Common myeloid progenitor, CD34-positive (primary cell): ENCODE measurements at regions of chr10 and their contacts with region 1.

Region 1: GRCh38 chr10:71727738-71728737 is 8.5 kb upstream of the C10orf105 start:
- DNase-seq: peak in 2 of 3 donors; percentile 88 to 90
- H3K4me3 ChIP-seq: peak overlapping the region in 2 of 7 experiments; percentile 21 to 23
- H3K27ac ChIP-seq: peak overlapping the region in 1 of 2 experiments; percentile 45
- H3K4me1 ChIP-seq: peaks cover 15 to 77% (median 71%) of the 10 kb centered on the region in 4 experiments
- H3K27me3 ChIP-seq: no peaks in the 10 kb centered on the region

Region 2: DNA sequence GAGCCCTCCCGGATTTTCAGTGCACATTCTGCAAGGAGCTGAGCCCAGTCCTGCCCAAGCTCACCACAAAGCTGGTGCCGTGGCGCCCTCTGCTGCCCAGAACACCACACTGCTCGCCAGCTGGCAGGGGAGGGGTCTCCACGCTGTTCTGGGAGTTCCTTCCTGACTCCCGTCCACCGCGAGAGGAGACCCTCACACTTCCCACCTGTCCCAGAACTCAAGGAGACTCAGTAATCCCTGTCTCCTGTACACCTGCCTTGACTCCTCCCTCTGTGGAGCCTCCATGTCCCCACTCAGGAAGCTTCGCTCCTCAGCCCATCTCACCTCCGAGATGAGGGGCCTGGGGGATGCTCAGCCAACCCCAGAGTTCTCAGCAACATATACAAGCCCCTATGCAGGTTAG is 19.7 kb before region 1 on chr10:
- CTCF ChIA-PET with region 1: interaction called, 41 read pairs
- POLR2A ChIA-PET with region 1: no interaction called
- DNase-seq: peak; percentile 41 to 54 (median 54)
- H3K4me3 ChIP-seq: no peak overlapping the region
- H3K27ac ChIP-seq: no peak overlapping the region
- H3K4me1 ChIP-seq: peaks cover 0 to 45% (median 17%) of the 10 kb centered on the region in 4 experiments
- H3K27me3 ChIP-seq: no peaks in the 10 kb centered on the region

Region 3: GRCh38 chr10:71740069-71740468 is 12.0 kb after region 1 on chr10:
- CTCF ChIA-PET with region 1: interaction called, 72 read pairs
- POLR2A ChIA-PET with region 1: interaction called, 3 read pairs
- DNase-seq: peak in 2 of 3 donors; percentile 22 to 35
- H3K4me3 ChIP-seq: no peak overlapping the region
- H3K27ac ChIP-seq: no peak overlapping the region
- H3K4me1 ChIP-seq: peaks cover 15 to 83% (median 72%) of the 10 kb centered on the region in 4 experiments
- H3K27me3 ChIP-seq: no peaks in the 10 kb centered on the region

Region 4: DNA sequence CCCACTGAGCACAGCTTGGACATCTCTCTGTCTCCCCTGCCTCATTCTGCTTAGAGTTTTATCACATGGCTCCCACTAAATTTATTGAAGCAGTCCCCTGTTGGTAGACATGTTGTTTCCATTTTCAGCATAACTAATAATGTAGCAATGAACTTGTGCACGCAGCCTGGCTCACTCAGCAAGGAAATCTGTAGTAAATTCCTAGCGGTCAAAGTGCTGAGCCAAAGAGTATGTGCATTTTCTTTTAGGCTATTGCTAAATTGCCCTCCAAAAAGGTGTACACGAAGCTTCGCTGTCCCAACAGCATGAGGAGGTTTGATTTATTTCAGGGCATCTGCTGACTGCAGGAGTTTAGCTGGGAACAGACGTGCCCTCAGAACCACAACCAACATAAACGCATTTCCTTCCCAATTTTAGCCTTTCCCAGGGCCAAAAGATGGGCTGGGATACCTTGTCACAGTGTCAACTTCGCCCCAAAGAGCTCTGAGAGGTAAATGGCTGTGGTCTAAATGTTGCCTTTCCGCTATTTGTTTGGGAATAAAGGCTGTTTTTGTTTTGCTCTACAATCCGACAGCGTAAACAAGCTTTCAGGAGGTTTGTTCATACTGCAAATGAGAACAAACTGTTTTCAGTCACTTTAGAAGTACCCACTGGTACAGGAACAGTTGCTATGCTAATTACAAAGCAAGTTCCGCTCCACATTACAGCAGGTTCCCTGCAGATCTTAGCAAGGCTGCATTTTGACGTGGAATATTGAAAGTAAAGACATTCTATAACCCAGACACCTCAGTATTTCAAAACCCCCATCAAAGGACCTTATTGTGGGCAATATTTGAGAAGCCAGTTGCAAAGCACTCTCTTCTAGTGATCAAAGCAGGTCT is 28.5 kb after region 1 on chr10:
- CTCF ChIA-PET with region 1: interaction called, 45 read pairs
- POLR2A ChIA-PET with region 1: no interaction called
- DNase-seq: peak in 2 of 3 donors; percentile 75 to 80
- H3K4me3 ChIP-seq: peak overlapping the region in 4 of 7 experiments; percentile 34 to 45 (median 40)
- H3K27ac ChIP-seq: peak overlapping the region; percentile 30 to 63
- H3K4me1 ChIP-seq: peaks cover 52 to 88% (median 87%) of the 10 kb centered on the region in 4 experiments
- H3K27me3 ChIP-seq: no peaks in the 10 kb centered on the region

Region 5: GRCh38 chr10:71812016-71812912 is 84.2 kb after region 1 on chr10:
- CTCF ChIA-PET with region 1: interaction called, 11 read pairs
- POLR2A ChIA-PET with region 1: no interaction called
- DNase-seq: peak; percentile 62 to 82 (median 78)
- H3K4me3 ChIP-seq: peak overlapping the region in 1 of 7 experiments; percentile 10
- H3K27ac ChIP-seq: no peak overlapping the region
- H3K4me1 ChIP-seq: peaks cover 0 to 18% (median 10%) of the 10 kb centered on the region in 4 experiments
- H3K27me3 ChIP-seq: no peaks in the 10 kb centered on the region

Region 6: GRCh38 chr10:71878327-71879034 is 150.4 kb after region 1 on chr10:
- CTCF ChIA-PET with region 1: no interaction called
- POLR2A ChIA-PET with region 1: no interaction called
- DNase-seq: peak; percentile 44 to 82 (median 78)
- H3K4me3 ChIP-seq: peak overlapping the region in 3 of 7 experiments; percentile 4 to 33 (median 7)
- H3K27ac ChIP-seq: peak overlapping the region in 1 of 2 experiments; percentile 66
- H3K4me1 ChIP-seq: peaks cover 8 to 23% (median 12%) of the 10 kb centered on the region in 4 experiments
- H3K27me3 ChIP-seq: no peaks in the 10 kb centered on the region